Lower leg skin (tissue), 4 donors: ENCODE measurements at regions of chr2 and their contacts with region 1.

Region 1: GRCh38 chr2:134118279-134119116 is 135.4 kb upstream of the MGAT5 start:
- DNase-seq: peak; percentile 92 to 96
- H3K4me3 ChIP-seq: no peak overlapping the region
- CTCF ChIP-seq: no peak
- POLR2A ChIP-seq: no peak

Region 2: GRCh38 chr2:134193006-134193405 is 74.5 kb after region 1 on chr2:
- intact Hi-C with region 1: loop called (anchors 10 kb)
- DNase-seq: no peak
- H3K4me3 ChIP-seq: no peak overlapping the region
- CTCF ChIP-seq: no peak
- POLR2A ChIP-seq: no peak

Region 3: GRCh38 chr2:134245340-134245984 is 127.0 kb after region 1 on chr2:
- intact Hi-C with region 1: loop called (anchors 10 kb)
- DNase-seq: peak; percentile 75 to 93
- H3K4me3 ChIP-seq: no peak overlapping the region
- CTCF ChIP-seq: no peak
- POLR2A ChIP-seq: no peak

Region 4: DNA sequence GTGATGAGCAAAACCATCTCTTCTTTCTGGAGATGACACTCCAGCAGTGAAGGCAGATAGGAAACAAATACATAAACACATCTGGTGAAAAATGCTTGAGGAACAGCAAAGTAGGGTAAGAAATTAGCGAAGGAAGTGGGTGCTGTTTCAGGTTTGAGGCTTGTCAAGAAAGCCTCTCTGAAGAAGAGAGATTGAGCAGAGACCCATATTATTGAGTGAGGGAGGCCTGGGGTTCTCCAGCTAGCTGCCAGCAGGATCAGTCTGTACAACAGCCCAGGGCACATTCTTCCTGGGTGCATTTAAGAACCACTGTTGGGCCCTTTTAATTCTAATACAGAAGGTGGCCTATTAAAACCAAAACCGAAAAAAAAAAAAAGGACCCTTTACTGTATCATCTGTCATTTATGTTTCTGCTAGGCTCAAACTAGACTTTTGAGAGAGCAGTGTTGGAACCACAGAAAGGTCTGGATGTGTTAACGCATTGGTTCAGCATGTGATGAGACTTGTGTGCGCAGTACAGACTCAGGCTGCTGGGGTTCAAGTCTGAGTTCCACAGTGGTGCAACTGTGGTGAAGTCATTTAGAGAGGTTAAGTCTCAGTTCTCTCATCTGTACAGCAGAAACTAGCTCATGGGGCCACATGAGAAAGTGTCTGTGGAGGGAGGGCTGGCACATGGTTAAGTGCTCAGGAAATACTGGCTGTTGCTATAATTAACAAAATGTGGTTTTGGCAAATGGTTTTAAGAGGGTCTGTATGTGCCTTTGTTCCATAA is 164.3 kb after region 1 on chr2:
- intact Hi-C with region 1: no loop called
- DNase-seq: no peak
- H3K4me3 ChIP-seq: no peak overlapping the region
- CTCF ChIP-seq: no peak
- POLR2A ChIP-seq: no peak

Region 5: GRCh38 chr2:134411828-134412638 is 293.5 kb after region 1 on chr2:
- intact Hi-C with region 1: loop called (anchors 10 kb)
- DNase-seq: peak; percentile 63 to 93
- H3K4me3 ChIP-seq: no peak overlapping the region
- CTCF ChIP-seq: no peak
- POLR2A ChIP-seq: no peak

Region 6: GRCh38 chr2:134836986-134837385 is 718.5 kb after region 1 on chr2:
- intact Hi-C with region 1: no loop called
- DNase-seq: no peak
- H3K4me3 ChIP-seq: no peak overlapping the region
- CTCF ChIP-seq: no peak
- POLR2A ChIP-seq: no peak